PC-3 (cell line): ENCODE measurements at regions of chr5 and their contacts with region 1.

Region 1: GRCh38 chr5:39691993-39692392 is 267.2 kb upstream of the DAB2 start:
- DNase-seq: peak; percentile 70
- ATAC-seq: peak; percentile 73
- H3K4me3 ChIP-seq: no peak overlapping the region
- H3K27ac ChIP-seq: no peak overlapping the region
- H3K4me1 ChIP-seq: 0 out of 2 replicates have a peak, but pooled peaks cover under 1% of the 10 kb centered on the region
- H3K27me3 ChIP-seq: no peaks in the 10 kb centered on the region
- CTCF ChIP-seq: peak; percentile 80

Region 2: DNA sequence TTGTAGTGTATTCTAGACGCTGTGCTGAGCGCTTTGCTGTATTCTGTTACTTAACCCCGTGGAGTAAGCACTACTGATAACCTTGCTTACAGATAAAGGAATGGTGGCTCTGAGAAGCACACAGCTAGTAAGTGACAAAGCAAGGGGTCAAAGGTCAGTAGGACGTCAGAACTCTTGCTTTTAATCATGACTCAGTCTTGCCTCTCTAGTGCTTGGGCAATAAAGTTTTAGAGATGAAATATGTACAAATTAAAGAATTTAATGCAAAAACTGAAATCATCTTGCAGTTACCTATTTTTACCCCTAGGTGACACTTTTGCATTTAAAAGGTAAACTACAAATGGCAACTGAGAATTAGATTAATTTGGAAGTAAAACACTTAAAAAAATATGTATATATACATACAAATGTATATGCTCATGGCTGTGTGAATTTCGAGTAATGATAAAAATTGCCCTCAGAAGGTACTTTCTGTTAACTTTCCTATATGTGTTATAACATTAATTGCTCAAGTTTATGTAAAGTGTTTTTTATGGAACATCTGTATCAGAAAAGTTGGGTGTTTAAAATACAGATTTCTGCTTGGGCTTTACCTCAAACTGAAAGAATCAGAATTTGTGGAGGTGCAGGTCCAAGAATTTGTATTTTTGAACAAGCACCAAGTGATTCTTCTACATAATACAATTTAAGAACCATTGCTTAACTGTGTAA is 92.1 kb before region 1 on chr5:
- CTCF ChIA-PET with region 1: no interaction called
- POLR2A ChIA-PET with region 1: no interaction called
- intact Hi-C with region 1: loop called (anchors 1 kb)
- DNase-seq: peak; percentile 84
- ATAC-seq: peak; percentile 81
- H3K4me3 ChIP-seq: no peak overlapping the region
- H3K27ac ChIP-seq: peak overlapping the region; percentile 36
- H3K4me1 ChIP-seq: peaks cover 16% of the 10 kb centered on the region
- H3K27me3 ChIP-seq: no peaks in the 10 kb centered on the region
- CTCF ChIP-seq: peak; percentile 90

Region 3: DNA sequence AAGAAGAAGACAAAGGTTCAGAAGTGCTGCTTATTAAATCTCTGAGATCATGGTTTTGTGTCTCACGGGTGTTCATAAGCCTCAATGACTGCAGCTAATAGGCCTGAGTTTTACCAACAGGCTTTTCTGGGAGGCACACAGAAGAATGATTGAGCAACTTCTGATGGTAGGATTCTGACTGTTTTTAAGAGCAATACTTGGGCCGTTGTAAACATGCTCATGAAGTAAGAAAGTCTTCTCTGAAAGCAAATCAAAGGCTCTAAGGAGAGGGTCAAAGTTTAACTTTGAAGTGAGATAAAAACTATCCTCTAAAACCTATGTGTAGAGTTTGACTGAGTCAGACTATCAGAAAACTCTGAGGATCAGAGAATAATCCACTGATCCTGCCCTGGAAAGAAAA is 123.7 kb after region 1 on chr5:
- CTCF ChIA-PET with region 1: no interaction called
- POLR2A ChIA-PET with region 1: no interaction called
- intact Hi-C with region 1: no loop called
- DNase-seq: no peak
- ATAC-seq: no peak
- H3K4me3 ChIP-seq: no peak overlapping the region
- H3K27ac ChIP-seq: no peak overlapping the region
- H3K4me1 ChIP-seq: no peaks in the 10 kb centered on the region
- H3K27me3 ChIP-seq: no peaks in the 10 kb centered on the region
- CTCF ChIP-seq: no peak